ENCODE measurements at regions of chr21 and their contacts with region 1.

Region 1: DNA sequence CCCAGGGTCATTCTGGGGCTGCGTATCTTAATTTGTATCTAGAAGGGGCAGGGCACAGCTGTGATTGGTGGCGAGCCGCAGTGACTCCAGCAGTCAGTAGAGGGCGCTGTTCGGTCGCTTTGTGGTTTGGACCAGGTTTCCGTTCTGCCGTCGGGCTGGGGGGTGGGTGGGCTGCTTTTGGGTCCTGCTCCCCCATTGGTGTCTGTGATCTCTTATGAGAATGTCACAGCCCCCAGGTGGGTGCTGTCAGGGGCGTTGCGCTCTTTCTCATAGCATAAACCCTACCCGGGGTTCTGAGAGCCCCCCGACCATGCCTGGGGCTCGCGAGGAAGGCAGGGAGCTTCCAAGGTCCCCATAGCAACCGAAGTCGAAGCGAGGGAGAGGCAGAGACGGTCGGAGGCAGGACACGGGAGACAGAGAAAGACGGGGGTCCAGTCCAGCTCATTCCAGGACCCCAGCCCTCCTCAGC is 5.4 kb downstream of the TFF3 start:
- DNase-seq: no peak
- ATAC-seq: peak; percentile 62
- H3K4me3 ChIP-seq: no peak overlapping the region
- H3K27ac ChIP-seq: no peak overlapping the region
- H3K4me1 ChIP-seq: peaks cover 44% of the 10 kb centered on the region
- H3K27me3 ChIP-seq: peaks cover 1 to 10% of the 10 kb centered on the region in 2 experiments; a peak in 4 of 5 replicates
- CTCF ChIP-seq: peak; percentile 78
- EP300 ChIP-seq: no peak
- POLR2A ChIP-seq: no peak
- RAD21 ChIP-seq: 0 out of 2 replicates have a peak, but pooled peaks have one; percentile 37

Region 2: GRCh38 chr21:42081138-42081537 is 228.6 kb before region 1 on chr21:
- CTCF ChIA-PET with region 1: no interaction called
- POLR2A ChIA-PET with region 1: no interaction called
- in situ Hi-C with region 1: no loop called
- intact Hi-C with region 1: no loop called
- DNase-seq: no peak
- ATAC-seq: no peak
- H3K4me3 ChIP-seq: no peak overlapping the region
- H3K27ac ChIP-seq: no peak overlapping the region
- H3K4me1 ChIP-seq: no peaks in the 10 kb centered on the region
- H3K27me3 ChIP-seq: peaks cover 6 to 56% of the 10 kb centered on the region in 2 experiments; a peak in 4 of 5 replicates
- CTCF ChIP-seq: no peak
- EP300 ChIP-seq: no peak
- POLR2A ChIP-seq: no peak
- RAD21 ChIP-seq: no peak

Region 3: GRCh38 chr21:42319851-42320572 is 10.2 kb after region 1 on chr21:
- CTCF ChIA-PET with region 1: no interaction called
- POLR2A ChIA-PET with region 1: no interaction called
- in situ Hi-C with region 1: no loop called
- intact Hi-C with region 1: no loop called
- DNase-seq: no peak
- ATAC-seq: peak; percentile 27; the same call in 2 of the 3 replicates
- H3K4me3 ChIP-seq: no peak overlapping the region
- H3K27ac ChIP-seq: no peak overlapping the region
- H3K4me1 ChIP-seq: peaks cover 15% of the 10 kb centered on the region
- H3K27me3 ChIP-seq: peaks cover 0 to 9% of the 10 kb centered on the region in 2 experiments; a peak in 2 of 5 replicates
- CTCF ChIP-seq: peak; percentile 39
- EP300 ChIP-seq: no peak
- POLR2A ChIP-seq: no peak
- RAD21 ChIP-seq: no peak

Region 4: GRCh38 chr21:42449296-42449927 is 139.6 kb after region 1 on chr21:
- CTCF ChIA-PET with region 1: interaction called, 20 read pairs
- POLR2A ChIA-PET with region 1: no interaction called
- in situ Hi-C with region 1: loop called (anchors 5 kb)
- intact Hi-C with region 1: loop called (anchors 1 kb)
- DNase-seq: no peak
- ATAC-seq: no peak
- H3K4me3 ChIP-seq: no peak overlapping the region
- H3K27ac ChIP-seq: no peak overlapping the region
- H3K4me1 ChIP-seq: peaks cover 4% of the 10 kb centered on the region; the same call in 1 of the 2 replicates
- H3K27me3 ChIP-seq: peaks cover 0 to 9% of the 10 kb centered on the region in 2 experiments; a peak in 2 of 5 replicates
- CTCF ChIP-seq: no peak
- EP300 ChIP-seq: no peak
- POLR2A ChIP-seq: no peak
- RAD21 ChIP-seq: no peak

Region 5: DNA sequence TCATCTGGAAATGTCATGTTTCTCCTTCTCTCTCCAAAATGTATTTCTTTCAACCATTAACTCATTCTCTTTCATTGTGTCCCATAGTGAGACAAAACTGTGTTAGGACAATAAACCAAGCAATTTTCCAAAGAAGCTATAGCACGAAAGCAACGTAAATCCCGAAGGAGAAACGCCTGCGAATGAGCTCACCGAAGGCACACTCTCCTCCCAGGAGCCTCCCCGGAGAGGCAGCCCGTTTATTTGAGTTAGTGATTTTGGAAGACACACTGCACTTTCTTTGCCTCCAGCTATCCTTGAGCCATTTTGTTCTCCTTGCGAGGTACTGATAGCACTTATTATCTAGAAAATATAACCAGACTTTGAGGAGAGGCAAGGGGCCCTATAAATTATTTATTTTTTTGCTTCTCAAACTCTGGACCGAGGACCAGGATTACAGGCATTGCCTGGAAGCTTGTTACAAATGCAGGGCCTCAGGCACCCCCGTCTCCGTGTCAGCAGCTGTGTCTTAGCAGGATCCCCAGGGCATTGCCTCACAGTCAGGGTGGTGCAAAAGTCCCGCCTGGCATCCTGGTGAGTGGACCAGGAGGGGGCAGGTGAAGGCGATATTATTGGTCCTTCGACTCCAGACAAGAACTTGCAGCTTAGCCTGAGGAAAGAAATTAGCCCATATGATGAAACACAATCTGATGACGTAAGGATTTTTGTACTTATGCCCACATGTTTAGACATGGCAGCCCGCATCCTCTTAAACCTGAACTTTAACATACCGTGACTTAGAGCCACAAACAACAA is 145.2 kb after region 1 on chr21:
- CTCF ChIA-PET with region 1: interaction called, 20 read pairs
- POLR2A ChIA-PET with region 1: no interaction called
- in situ Hi-C with region 1: no loop called
- intact Hi-C with region 1: loop called (anchors 1 kb)
- DNase-seq: no peak
- ATAC-seq: no peak
- H3K4me3 ChIP-seq: no peak overlapping the region
- H3K27ac ChIP-seq: no peak overlapping the region
- H3K4me1 ChIP-seq: peaks cover 4% of the 10 kb centered on the region; the same call in 1 of the 2 replicates
- H3K27me3 ChIP-seq: peaks cover 0 to 12% of the 10 kb centered on the region in 2 experiments; a peak in 2 of 5 replicates
- CTCF ChIP-seq: no peak
- EP300 ChIP-seq: no peak
- POLR2A ChIP-seq: no peak
- RAD21 ChIP-seq: no peak

Region 6: GRCh38 chr21:42556960-42557359 is 247.2 kb after region 1 on chr21:
- CTCF ChIA-PET with region 1: no interaction called
- POLR2A ChIA-PET with region 1: no interaction called
- in situ Hi-C with region 1: no loop called
- intact Hi-C with region 1: no loop called
- DNase-seq: no peak
- ATAC-seq: no peak
- H3K4me3 ChIP-seq: no peak overlapping the region
- H3K27ac ChIP-seq: no peak overlapping the region
- H3K4me1 ChIP-seq: peaks cover 32% of the 10 kb centered on the region
- H3K27me3 ChIP-seq: no peaks in the 10 kb centered on the region; a peak in 2 of 5 replicates
- CTCF ChIP-seq: no peak
- EP300 ChIP-seq: no peak
- POLR2A ChIP-seq: no peak
- RAD21 ChIP-seq: no peak

Measured in HepG2 (cell line).